ENCODE measurements at regions of chr19 and their contacts with region 1.

Region 1: GRCh38 chr19:48255376-48256303 is at the start of gene CARD8:
- DNase-seq: peak; percentile 94
- H3K4me3 ChIP-seq: peak within 1 kb of the TSS; percentile 32 to 81 (median 72)
- H3K27ac ChIP-seq: peak within 1 kb of the TSS; percentile 92
- H3K4me1 ChIP-seq: peaks cover 60% of the 10 kb centered on the region
- H3K27me3 ChIP-seq: no peaks in the 10 kb centered on the region
- CTCF ChIP-seq: no peak
- POLR2A ChIP-seq: peak; percentile 93
- total RNA-seq, gene CARD8: 123 and 156 TPM in 2 replicates

Region 2: GRCh38 chr19:48110350-48110966 is 145.2 kb before region 1 on chr19 and contains the start of gene PLA2G4C:
- CTCF ChIA-PET with region 1: interaction called, 11 read pairs
- POLR2A ChIA-PET with region 1: no interaction called
- dilution Hi-C with region 1: no loop called
- intact Hi-C with region 1: loop called (anchors 1 kb)
- DNase-seq: peak; percentile 94
- H3K4me3 ChIP-seq: peak within 1 kb of the TSS in 2 of 3 experiments; percentile 25 to 71
- H3K27ac ChIP-seq: peak within 1 kb of the TSS; percentile 96
- H3K4me1 ChIP-seq: peaks cover 32% of the 10 kb centered on the region
- H3K27me3 ChIP-seq: no peaks in the 10 kb centered on the region
- CTCF ChIP-seq: no peak
- POLR2A ChIP-seq: peak; percentile 60
- total RNA-seq, gene PLA2G4C: 32.6 and 63.4 TPM in 2 replicates

Region 3: GRCh38 chr19:48170038-48170812 is 85.4 kb before region 1 on chr19 and contains the starts of genes LIG1 and ZSWIM9:
- CTCF ChIA-PET with region 1: no interaction called
- POLR2A ChIA-PET with region 1: no interaction called
- dilution Hi-C with region 1: no loop called
- intact Hi-C with region 1: loop called (anchors 2 kb)
- DNase-seq: peak; percentile 97
- H3K4me3 ChIP-seq: peak within 1 kb of the TSS; percentile 69 to 88 (median 87)
- H3K27ac ChIP-seq: peak within 1 kb of the TSS; percentile 76
- H3K4me1 ChIP-seq: peaks cover 13% of the 10 kb centered on the region
- H3K27me3 ChIP-seq: no peaks in the 10 kb centered on the region
- CTCF ChIP-seq: peak in 1 of 2 donors; percentile 20
- POLR2A ChIP-seq: no peak
- total RNA-seq, gene LIG1: 94.7 and 100 TPM in 2 replicates
- total RNA-seq, gene ZSWIM9: 7.4 and 8.6 TPM in 2 replicates

Region 4: DNA sequence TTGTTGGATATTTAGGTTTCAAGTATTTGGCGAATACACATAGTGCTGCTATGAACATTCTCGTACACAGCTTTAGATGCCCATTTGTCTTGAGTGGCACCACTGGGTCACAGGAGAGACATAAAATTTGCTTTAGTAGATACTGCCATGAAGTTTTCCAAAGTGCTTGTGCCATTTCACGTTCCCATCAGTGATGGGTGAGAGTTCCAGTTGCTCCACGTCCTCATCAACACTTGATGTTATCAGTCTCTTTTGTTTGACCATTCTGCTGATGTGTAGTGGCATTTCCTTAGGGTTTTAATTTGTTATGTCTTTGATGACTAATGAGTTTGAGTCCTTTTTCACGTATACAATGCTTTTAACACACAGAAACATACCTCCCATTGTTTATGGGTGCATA is 74.1 kb before region 1 on chr19:
- CTCF ChIA-PET with region 1: no interaction called
- POLR2A ChIA-PET with region 1: no interaction called
- dilution Hi-C with region 1: no loop called
- intact Hi-C with region 1: no loop called
- DNase-seq: no peak
- H3K4me3 ChIP-seq: no peak overlapping the region
- H3K27ac ChIP-seq: no peak overlapping the region
- H3K4me1 ChIP-seq: no peaks in the 10 kb centered on the region
- H3K27me3 ChIP-seq: no peaks in the 10 kb centered on the region
- CTCF ChIP-seq: no peak
- POLR2A ChIP-seq: no peak

Region 5: DNA sequence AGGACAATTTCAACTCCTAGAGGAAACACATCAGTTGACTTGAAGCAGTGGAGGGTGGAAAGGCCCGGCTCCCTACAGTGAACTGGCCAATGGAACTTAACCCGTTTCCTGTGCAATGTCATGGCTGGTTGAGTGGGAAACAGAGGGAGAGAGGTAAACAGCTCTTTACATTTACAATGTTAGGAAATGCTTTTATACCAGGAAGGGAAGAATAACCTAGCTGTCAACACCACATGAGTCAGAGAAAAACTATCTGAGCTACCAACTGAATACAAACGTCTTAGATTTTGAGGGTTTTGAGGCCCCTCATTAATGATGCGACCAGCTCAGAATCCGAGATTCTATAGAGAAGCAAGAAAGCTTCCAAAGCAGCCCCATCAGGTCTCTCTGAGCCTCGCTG is 36.6 kb before region 1 on chr19:
- CTCF ChIA-PET with region 1: interaction called, 17 read pairs
- POLR2A ChIA-PET with region 1: interaction called, 4 read pairs
- dilution Hi-C with region 1: no loop called
- intact Hi-C with region 1: no loop called
- DNase-seq: peak; percentile 65
- H3K4me3 ChIP-seq: no peak overlapping the region
- H3K27ac ChIP-seq: peak overlapping the region; percentile 63
- H3K4me1 ChIP-seq: peaks cover 19% of the 10 kb centered on the region
- H3K27me3 ChIP-seq: no peaks in the 10 kb centered on the region
- CTCF ChIP-seq: no peak
- POLR2A ChIP-seq: no peak

Region 6: GRCh38 chr19:48271531-48272151 is 16.0 kb after region 1 on chr19:
- CTCF ChIA-PET with region 1: interaction called, 11 read pairs
- POLR2A ChIA-PET with region 1: no interaction called
- dilution Hi-C with region 1: no loop called
- intact Hi-C with region 1: no loop called
- DNase-seq: peak; percentile 31
- H3K4me3 ChIP-seq: peak overlapping the region; percentile 23 to 53 (median 30)
- H3K27ac ChIP-seq: no peak overlapping the region
- H3K4me1 ChIP-seq: peaks cover 5% of the 10 kb centered on the region
- H3K27me3 ChIP-seq: no peaks in the 10 kb centered on the region
- CTCF ChIP-seq: no peak
- POLR2A ChIP-seq: no peak

Region 7: DNA sequence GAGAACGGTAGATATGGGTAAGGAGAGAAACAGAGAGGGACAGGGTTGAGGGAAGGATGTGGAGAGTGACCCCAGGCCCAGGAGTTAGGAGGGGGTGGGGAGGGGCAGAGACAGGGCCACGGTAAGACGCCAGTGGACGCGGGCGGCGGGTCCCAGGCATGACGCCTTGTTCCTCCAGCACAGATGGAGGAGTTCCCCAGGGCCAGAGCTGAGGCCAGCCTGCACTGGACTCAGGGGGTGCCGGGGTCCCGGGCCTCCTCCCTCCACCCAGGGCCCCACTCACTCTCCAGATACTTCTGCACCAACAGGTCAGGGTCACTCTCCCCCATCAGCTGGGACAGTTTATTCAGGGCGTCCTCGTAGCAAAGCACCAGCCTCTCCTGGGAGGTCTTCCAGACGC is 47.7 kb after region 1 on chr19:
- CTCF ChIA-PET with region 1: no interaction called
- POLR2A ChIA-PET with region 1: no interaction called
- dilution Hi-C with region 1: no loop called
- intact Hi-C with region 1: no loop called
- DNase-seq: no peak
- H3K4me3 ChIP-seq: no peak overlapping the region
- H3K27ac ChIP-seq: no peak overlapping the region
- H3K4me1 ChIP-seq: no peaks in the 10 kb centered on the region
- H3K27me3 ChIP-seq: peaks cover 6% of the 10 kb centered on the region in 2 experiments
- CTCF ChIP-seq: no peak
- POLR2A ChIP-seq: no peak

Region 8: GRCh38 chr19:48372904-48373303 is 117.3 kb after region 1 on chr19:
- CTCF ChIA-PET with region 1: no interaction called
- POLR2A ChIA-PET with region 1: no interaction called
- dilution Hi-C with region 1: no loop called
- intact Hi-C with region 1: no loop called
- DNase-seq: no peak
- H3K4me3 ChIP-seq: no peak overlapping the region
- H3K27ac ChIP-seq: no peak overlapping the region
- H3K4me1 ChIP-seq: no peaks in the 10 kb centered on the region
- H3K27me3 ChIP-seq: no peaks in the 10 kb centered on the region
- CTCF ChIP-seq: no peak
- POLR2A ChIP-seq: no peak

Measured in endothelial cell of umbilical vein (primary cell).